WTC11 (cell line): ENCODE measurements at regions of chr7 and their contacts with region 1.

Region 1: GRCh38 chr7:139482662-139483469 is 607 bp downstream of the KLRG2 start:
- DNase-seq: peak; percentile 64
- ATAC-seq: peak; percentile 10
- H3K4me3 Mint-ChIP-seq: peak overlapping the region; percentile 73
- H3K27ac Mint-ChIP-seq: no peak overlapping the region
- H3K4me1 Mint-ChIP-seq: peaks cover 12% of the 10 kb centered on the region
- H3K27me3 Mint-ChIP-seq: peaks cover 28% of the 10 kb centered on the region
- CTCF ChIP-seq: no peak

Region 2: GRCh38 chr7:139382439-139382838 is 100.4 kb before region 1 on chr7:
- CTCF ChIA-PET with region 1: no interaction called
- POLR2A ChIA-PET with region 1: no interaction called
- DNase-seq: no peak
- ATAC-seq: no peak
- H3K4me3 Mint-ChIP-seq: no peak overlapping the region
- H3K27ac Mint-ChIP-seq: no peak overlapping the region
- H3K4me1 Mint-ChIP-seq: no peaks in the 10 kb centered on the region
- H3K27me3 Mint-ChIP-seq: no peaks in the 10 kb centered on the region
- CTCF ChIP-seq: no peak

Region 3: GRCh38 chr7:139526578-139527544 is 44.0 kb after region 1 on chr7:
- CTCF ChIA-PET with region 1: no interaction called
- POLR2A ChIA-PET with region 1: no interaction called
- DNase-seq: no peak
- ATAC-seq: no peak
- H3K4me3 Mint-ChIP-seq: no peak overlapping the region
- H3K27ac Mint-ChIP-seq: no peak overlapping the region
- H3K4me1 Mint-ChIP-seq: peaks cover 3% of the 10 kb centered on the region
- H3K27me3 Mint-ChIP-seq: peaks cover 58% of the 10 kb centered on the region
- CTCF ChIP-seq: no peak

Region 4: DNA sequence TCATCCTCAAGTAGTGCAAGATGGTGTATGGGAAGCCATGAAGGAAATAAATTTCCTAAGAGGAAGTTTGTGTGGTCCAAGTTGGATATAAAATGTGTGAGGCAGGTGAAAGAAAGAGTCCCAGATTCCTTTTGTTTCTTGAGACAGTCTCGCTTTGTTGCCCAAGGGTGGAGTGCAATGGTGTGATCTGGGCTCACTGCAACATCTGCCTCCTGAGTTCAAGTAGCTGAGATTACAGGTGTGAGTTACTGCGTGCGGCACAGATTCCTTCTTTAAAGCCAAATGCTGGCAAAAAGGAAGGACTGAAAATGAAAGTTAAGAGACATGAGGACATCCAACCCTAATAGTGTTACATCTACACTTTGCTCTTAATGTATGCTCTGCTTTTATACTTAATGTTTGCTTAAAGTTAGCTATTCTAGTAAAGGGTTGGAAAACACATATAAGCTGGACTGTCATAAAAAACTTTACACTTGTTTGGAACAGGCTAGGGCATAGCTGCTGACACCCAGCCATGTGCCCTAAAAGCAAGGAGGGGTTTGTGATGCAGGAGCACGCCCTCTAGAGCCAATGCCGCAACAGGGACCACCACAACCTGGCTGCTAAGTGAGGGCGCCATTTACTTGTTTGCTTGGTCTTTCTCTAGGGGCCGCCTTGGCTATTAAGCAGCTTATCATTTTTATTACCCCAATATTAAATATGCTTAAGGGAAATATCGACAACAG is 75.2 kb after region 1 on chr7:
- CTCF ChIA-PET with region 1: interaction called, 12 read pairs
- POLR2A ChIA-PET with region 1: no interaction called
- DNase-seq: peak; percentile 49
- ATAC-seq: peak; percentile 73
- H3K4me3 Mint-ChIP-seq: no peak overlapping the region
- H3K27ac Mint-ChIP-seq: no peak overlapping the region
- H3K4me1 Mint-ChIP-seq: peaks cover 18% of the 10 kb centered on the region
- H3K27me3 Mint-ChIP-seq: no peaks in the 10 kb centered on the region; the same call in 1 of the 2 replicates
- CTCF ChIP-seq: no peak